PC-3 (cell line): ENCODE measurements at regions of chr7 and their contacts with region 1.

Region 1: DNA sequence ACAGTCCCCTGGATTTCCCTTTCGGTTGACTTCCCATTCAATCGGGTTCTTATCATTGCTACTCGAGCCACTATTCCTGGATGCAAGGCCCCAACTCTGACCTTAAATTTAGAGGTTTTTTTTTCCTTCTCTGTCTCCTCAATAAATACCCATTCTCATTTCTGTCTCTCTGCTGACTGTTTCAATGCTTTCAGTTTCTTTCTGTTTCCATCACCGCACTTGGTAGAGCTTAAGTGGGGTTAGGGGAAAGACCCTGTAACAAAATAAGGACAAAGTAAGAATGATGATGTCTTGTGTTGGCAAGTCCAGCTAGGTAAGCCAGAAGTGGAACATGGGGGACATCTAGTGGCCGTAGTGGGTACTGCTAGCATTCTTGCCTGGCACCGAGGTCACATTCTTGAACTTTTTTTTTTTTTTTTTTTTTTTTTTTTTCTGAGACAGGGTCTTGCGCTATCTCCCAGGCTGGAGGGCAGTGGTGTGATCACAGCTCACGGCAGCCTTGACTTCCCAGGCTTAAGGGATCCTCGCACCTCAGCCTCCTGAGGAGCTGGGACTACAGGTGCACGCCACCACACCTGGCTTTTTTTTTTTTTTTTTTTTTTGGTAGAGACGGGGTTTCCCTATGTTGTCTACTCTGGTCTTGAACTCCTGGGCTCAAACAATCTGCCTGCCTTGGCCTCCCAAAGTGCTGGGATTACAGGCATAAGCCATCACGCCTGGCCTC is 40.3 kb downstream of the ZC3HC1 start:
- DNase-seq: peak; percentile 91
- ATAC-seq: 0 out of 2 replicates have a peak, but pooled peaks have one; percentile 3
- H3K4me3 ChIP-seq: no peak overlapping the region
- H3K27ac ChIP-seq: peak overlapping the region; percentile 98
- H3K4me1 ChIP-seq: peaks cover 26% of the 10 kb centered on the region
- H3K27me3 ChIP-seq: no peaks in the 10 kb centered on the region
- CTCF ChIP-seq: peak; percentile 88

Region 2: GRCh38 chr7:129896568-129897382 is 114.1 kb before region 1 on chr7:
- CTCF ChIA-PET with region 1: interaction called, 5 read pairs
- POLR2A ChIA-PET with region 1: interaction called, 4 read pairs
- intact Hi-C with region 1: loop called (anchors 2 kb)
- DNase-seq: peak; percentile 70
- ATAC-seq: peak; percentile 96
- H3K4me3 ChIP-seq: no peak overlapping the region
- H3K27ac ChIP-seq: peak overlapping the region; percentile 54
- H3K4me1 ChIP-seq: peaks cover 15% of the 10 kb centered on the region
- H3K27me3 ChIP-seq: no peaks in the 10 kb centered on the region
- CTCF ChIP-seq: no peak

Region 3: GRCh38 chr7:129952653-129953560 is 57.9 kb before region 1 on chr7 and contains the start of gene UBE2H:
- CTCF ChIA-PET with region 1: interaction called, 11 read pairs
- POLR2A ChIA-PET with region 1: interaction called, 16 read pairs
- intact Hi-C with region 1: loop called (anchors 1 kb)
- DNase-seq: peak; percentile 93
- ATAC-seq: peak; percentile 38
- H3K4me3 ChIP-seq: peak within 1 kb of the TSS; percentile 95
- H3K27ac ChIP-seq: peak within 1 kb of the TSS; percentile 95
- H3K4me1 ChIP-seq: peaks cover 37% of the 10 kb centered on the region
- H3K27me3 ChIP-seq: no peaks in the 10 kb centered on the region
- CTCF ChIP-seq: no peak
- total RNA-seq, gene UBE2H: 62.5 and 102 TPM in 2 replicates

Region 4: GRCh38 chr7:129969807-129970446 is 40.9 kb before region 1 on chr7:
- CTCF ChIA-PET with region 1: interaction called, 6 read pairs
- POLR2A ChIA-PET with region 1: interaction called, 18 read pairs
- intact Hi-C with region 1: loop called (anchors 1 kb)
- DNase-seq: peak; percentile 98
- ATAC-seq: peak; percentile 88
- H3K4me3 ChIP-seq: no peak overlapping the region
- H3K27ac ChIP-seq: peak overlapping the region; percentile 96
- H3K4me1 ChIP-seq: peaks cover 36% of the 10 kb centered on the region
- H3K27me3 ChIP-seq: no peaks in the 10 kb centered on the region
- CTCF ChIP-seq: no peak

Region 5: DNA sequence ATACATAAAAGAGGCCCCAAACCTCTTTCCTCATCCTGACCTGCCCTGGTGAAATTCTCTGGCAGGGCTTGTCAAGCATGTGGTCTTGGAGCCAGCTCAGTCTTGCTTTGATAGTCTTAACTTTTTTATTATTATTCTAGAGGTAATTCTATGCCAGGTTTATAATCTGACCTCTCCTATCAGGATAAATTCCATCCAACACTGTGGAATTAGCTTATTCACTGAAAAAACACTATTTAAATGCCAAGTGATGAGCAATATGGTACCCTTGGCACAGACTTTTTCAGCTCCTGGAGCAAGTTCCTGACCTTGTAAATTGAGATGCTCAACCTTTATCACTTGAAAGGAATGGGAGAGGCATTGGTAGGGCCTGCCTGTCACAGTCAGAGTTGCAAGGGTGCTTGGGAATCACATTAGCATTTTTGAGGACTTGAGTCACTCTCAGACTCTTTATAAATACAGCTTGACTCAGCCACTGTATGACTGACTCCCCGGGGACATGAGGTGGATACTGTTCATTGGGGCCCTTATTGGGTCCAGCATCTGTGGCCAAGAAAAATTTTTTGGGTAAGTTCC is 281.9 kb after region 1 on chr7 and contains the start of gene CPA4:
- CTCF ChIA-PET with region 1: interaction called, 12 read pairs
- POLR2A ChIA-PET with region 1: no interaction called
- intact Hi-C with region 1: no loop called
- DNase-seq: peak; percentile 97
- ATAC-seq: peak; percentile 97
- H3K4me3 ChIP-seq: peak within 1 kb of the TSS; percentile 38
- H3K27ac ChIP-seq: peak within 1 kb of the TSS; percentile 66
- H3K4me1 ChIP-seq: peaks cover 44% of the 10 kb centered on the region
- H3K27me3 ChIP-seq: no peaks in the 10 kb centered on the region
- CTCF ChIP-seq: no peak
- total RNA-seq, gene CPA4: 10.1 and 22.1 TPM in 2 replicates